Calu3 (cell line): ENCODE measurements at regions of chr21 and their contacts with region 1.

Region 1: GRCh38 chr21:44801468-44802395 is at the start of gene UBE2G2:
- DNase-seq: peak; percentile 84
- H3K4me3 Mint-ChIP-seq: peak within 1 kb of the TSS; percentile 82
- H3K27ac Mint-ChIP-seq: peak within 1 kb of the TSS; percentile 61
- H3K4me1 Mint-ChIP-seq: peaks cover 19% of the 10 kb centered on the region
- H3K27me3 Mint-ChIP-seq: no peaks in the 10 kb centered on the region
- CTCF ChIP-seq: no peak
- total RNA-seq, gene UBE2G2: 61.7 and 70.8 TPM in 2 replicates

Region 2: GRCh38 chr21:44593598-44594405 is 207.9 kb before region 1 on chr21:
- CTCF ChIA-PET with region 1: no interaction called
- intact Hi-C with region 1: no loop called
- DNase-seq: no peak
- H3K4me3 Mint-ChIP-seq: no peak overlapping the region
- H3K27ac Mint-ChIP-seq: no peak overlapping the region
- H3K4me1 Mint-ChIP-seq: no peaks in the 10 kb centered on the region
- H3K27me3 Mint-ChIP-seq: peaks cover 93% of the 10 kb centered on the region
- CTCF ChIP-seq: no peak

Region 3: GRCh38 chr21:44873356-44874239 is 71.9 kb after region 1 on chr21 and contains the start of gene PTTG1IP:
- CTCF ChIA-PET with region 1: interaction called, 7 read pairs
- intact Hi-C with region 1: loop called (anchors 10 kb)
- DNase-seq: peak; percentile 96
- H3K4me3 Mint-ChIP-seq: peak within 1 kb of the TSS; percentile 86
- H3K27ac Mint-ChIP-seq: peak within 1 kb of the TSS; percentile 83
- H3K4me1 Mint-ChIP-seq: peaks cover 27% of the 10 kb centered on the region
- H3K27me3 Mint-ChIP-seq: no peaks in the 10 kb centered on the region
- CTCF ChIP-seq: no peak
- total RNA-seq, gene PTTG1IP: 135 and 136 TPM in 2 replicates

Region 4: DNA sequence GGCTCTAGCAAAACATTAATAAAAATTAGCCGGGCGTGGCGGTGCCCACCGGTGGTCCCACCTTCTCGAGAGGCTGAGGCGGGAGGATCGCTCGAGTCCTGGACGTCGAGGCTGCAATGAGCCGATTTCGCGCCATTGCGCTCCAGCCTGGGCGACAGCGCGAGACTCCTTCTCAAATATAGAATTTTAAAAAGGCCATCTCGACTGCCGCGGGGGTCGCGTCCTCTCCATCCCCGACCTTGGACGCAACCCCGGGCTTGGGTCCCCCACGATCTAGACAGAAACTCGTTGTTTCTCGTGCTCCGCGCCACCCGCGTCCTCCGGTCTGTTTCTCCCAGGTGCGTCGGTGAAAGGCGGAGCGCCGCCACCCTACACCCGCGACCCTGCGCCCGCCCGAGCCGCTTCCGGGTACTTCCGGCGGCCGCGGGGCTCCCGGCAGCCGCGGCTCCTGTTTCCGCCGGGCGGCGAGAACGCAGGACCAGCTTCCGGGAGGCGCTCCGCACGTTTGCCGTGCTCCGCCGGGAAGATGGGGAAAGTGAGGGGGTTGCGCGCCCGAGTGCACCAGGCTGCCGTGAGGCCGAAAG is 137.9 kb after region 1 on chr21 and contains the start of gene SLX9:
- CTCF ChIA-PET with region 1: no interaction called
- intact Hi-C with region 1: loop called (anchors 10 kb)
- DNase-seq: peak; percentile 80
- H3K4me3 Mint-ChIP-seq: peak within 1 kb of the TSS; percentile 74
- H3K27ac Mint-ChIP-seq: peak within 1 kb of the TSS; percentile 19
- H3K4me1 Mint-ChIP-seq: peaks cover 21% of the 10 kb centered on the region
- H3K27me3 Mint-ChIP-seq: no peaks in the 10 kb centered on the region
- CTCF ChIP-seq: no peak
- total RNA-seq, gene SLX9: 24.6 and 28.6 TPM in 2 replicates

Region 5: GRCh38 chr21:45129189-45129923 is 327.6 kb after region 1 on chr21:
- CTCF ChIA-PET with region 1: interaction called, 8 read pairs
- intact Hi-C with region 1: loop called (anchors 10 kb)
- DNase-seq: peak; percentile 11
- H3K4me3 Mint-ChIP-seq: peak overlapping the region; percentile 22
- H3K27ac Mint-ChIP-seq: no peak overlapping the region
- H3K4me1 Mint-ChIP-seq: peaks cover 11% of the 10 kb centered on the region
- H3K27me3 Mint-ChIP-seq: peaks cover 29% of the 10 kb centered on the region
- CTCF ChIP-seq: no peak